Endothelial cell of umbilical vein (primary cell): ENCODE measurements at regions of chrX and their contacts with region 1.

Region 1: DNA sequence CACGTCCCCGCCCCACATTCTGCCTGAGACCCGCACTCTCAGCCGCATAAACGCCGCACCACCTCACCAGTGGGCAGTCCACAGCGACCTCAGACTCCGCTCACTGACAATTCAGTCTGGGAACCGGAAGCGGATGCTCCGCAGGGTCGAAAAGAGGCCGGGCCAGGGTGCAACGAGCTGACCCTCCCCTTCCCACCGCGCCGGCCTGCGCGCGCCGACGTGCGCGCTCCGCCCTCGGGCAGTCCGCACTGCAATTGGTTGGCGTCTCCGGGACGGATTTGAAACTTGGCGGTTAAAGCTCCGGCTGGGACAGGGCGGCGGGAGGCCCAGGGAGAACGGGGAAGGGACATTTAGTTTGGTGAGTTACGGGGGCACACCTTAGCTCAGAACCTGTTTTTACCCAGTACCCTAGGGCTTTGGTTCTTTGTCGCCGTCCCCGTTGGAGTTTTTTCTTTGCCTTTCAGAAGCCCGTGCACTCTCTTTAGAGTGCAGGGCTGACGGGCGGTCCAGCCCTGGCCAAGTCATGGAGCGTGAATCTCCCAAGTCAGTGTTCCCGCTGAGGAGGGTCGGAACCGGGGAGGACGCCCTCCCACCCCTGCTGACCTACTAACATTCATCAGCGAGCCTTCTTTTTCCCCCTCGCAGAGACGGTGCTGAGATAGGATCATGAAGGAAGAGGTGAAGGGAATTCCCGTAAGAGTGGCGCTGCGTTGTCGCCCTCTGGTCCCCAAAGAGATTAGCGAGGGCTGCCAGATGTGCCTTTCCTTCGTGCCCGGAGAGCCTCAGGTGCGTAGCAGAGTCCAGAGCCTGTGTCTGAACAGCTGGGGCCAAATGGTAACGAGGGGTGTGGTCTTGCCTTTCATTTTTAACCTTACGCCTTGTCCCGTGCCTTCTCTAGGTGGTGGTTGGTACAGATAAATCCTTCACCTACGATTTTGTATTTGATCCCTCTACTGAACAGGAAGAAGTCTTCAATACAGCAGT is at the starts of genes KIF4A and PDZD11:
- DNase-seq: peak; percentile 83
- H3K4me3 ChIP-seq: peak within 1 kb of the TSS; percentile 70 to 86 (median 84)
- H3K27ac ChIP-seq: peak within 1 kb of the TSS; percentile 66
- H3K4me1 ChIP-seq: peaks cover 18% of the 10 kb centered on the region
- H3K27me3 ChIP-seq: no peaks in the 10 kb centered on the region
- CTCF ChIP-seq: no peak
- POLR2A ChIP-seq: peak; percentile 71
- total RNA-seq, gene KIF4A: 34.4 and 41.3 TPM in 2 replicates
- total RNA-seq, gene PDZD11: 44.5 and 45.6 TPM in 2 replicates

Region 2: GRCh38 chrX:70168238-70169188 is 121.6 kb before region 1 on chrX:
- CTCF ChIA-PET with region 1: no interaction called
- POLR2A ChIA-PET with region 1: no interaction called
- dilution Hi-C with region 1: no loop called
- intact Hi-C with region 1: no loop called
- DNase-seq: peak; percentile 34
- H3K4me3 ChIP-seq: no peak overlapping the region
- H3K27ac ChIP-seq: peak overlapping the region; percentile 28
- H3K4me1 ChIP-seq: peaks cover 30% of the 10 kb centered on the region
- H3K27me3 ChIP-seq: no peaks in the 10 kb centered on the region
- CTCF ChIP-seq: no peak
- POLR2A ChIP-seq: no peak

Region 3: GRCh38 chrX:70398899-70399298 is 108.8 kb after region 1 on chrX:
- CTCF ChIA-PET with region 1: no interaction called
- POLR2A ChIA-PET with region 1: no interaction called
- dilution Hi-C with region 1: no loop called
- intact Hi-C with region 1: loop called (anchors 10 kb)
- DNase-seq: peak; percentile 47
- H3K4me3 ChIP-seq: no peak overlapping the region
- H3K27ac ChIP-seq: peak overlapping the region; percentile 11
- H3K4me1 ChIP-seq: peaks cover 8% of the 10 kb centered on the region
- H3K27me3 ChIP-seq: no peaks in the 10 kb centered on the region
- CTCF ChIP-seq: no peak
- POLR2A ChIP-seq: no peak

Region 4: DNA sequence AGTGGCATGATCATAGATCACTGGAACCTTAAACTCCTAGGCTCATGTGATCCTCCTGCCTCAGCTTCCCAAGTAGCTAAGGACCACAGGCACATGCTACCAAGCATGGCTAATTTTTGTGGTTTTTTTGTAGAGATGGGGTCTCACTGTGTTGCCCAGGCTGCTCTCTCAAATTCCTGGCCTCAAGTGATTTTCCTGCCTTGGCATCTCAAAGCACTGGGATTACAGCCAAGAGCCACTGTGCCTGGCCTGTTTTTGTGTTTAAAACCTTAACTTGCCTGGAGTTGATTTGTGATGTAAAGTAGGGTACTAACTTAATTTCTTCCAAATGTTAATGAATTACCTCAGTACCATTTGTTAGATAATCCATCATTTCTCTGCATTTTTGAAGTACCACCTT is 176.9 kb after region 1 on chrX:
- CTCF ChIA-PET with region 1: no interaction called
- POLR2A ChIA-PET with region 1: no interaction called
- dilution Hi-C with region 1: no loop called
- intact Hi-C with region 1: no loop called
- DNase-seq: no peak
- H3K4me3 ChIP-seq: no peak overlapping the region
- H3K27ac ChIP-seq: no peak overlapping the region
- H3K4me1 ChIP-seq: no peaks in the 10 kb centered on the region
- H3K27me3 ChIP-seq: no peaks in the 10 kb centered on the region
- CTCF ChIP-seq: no peak
- POLR2A ChIP-seq: no peak